SK-N-SH (cell line): ENCODE measurements at regions of chr9 and their contacts with region 1.

Region 1: DNA sequence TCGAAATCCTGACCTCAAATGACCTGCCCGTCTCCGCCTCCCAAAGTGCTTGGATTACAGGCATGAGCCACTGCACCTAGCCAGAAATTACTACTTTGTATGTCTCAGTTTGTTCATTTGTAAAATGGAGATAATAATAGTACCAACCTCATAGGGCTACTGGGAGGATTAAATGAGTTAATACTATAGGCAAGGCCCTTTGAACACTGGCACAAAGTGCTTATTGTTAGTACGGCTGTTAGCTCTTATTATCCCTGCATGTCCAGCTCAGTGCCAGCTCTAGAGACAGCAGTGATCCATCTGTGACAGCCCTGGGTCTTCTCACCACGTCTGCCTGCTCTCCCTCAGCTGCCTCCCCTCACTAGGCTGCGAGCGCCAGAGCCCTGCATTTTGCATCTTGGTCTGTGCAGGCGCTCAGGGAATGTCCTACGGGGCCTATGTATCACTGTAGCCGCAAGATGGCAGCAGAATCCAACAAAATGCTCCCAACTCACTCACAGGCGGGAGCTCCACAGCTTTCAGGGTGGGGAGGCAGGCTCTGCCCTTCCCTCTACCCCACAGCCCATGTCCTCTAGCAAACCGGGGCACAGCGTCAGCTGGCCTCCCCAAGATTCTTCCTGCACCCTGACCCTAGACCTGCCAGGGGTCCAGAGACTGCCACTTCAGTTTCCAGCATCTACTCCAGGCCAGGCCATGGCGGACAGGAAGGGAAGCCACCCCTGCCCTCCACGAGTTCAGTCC is 17.7 kb upstream of the AKNA start:
- DNase-seq: peak; percentile 91
- H3K4me3 ChIP-seq: peak overlapping the region in 1 of 2 experiments; percentile 48; a peak in 1 of 4 replicates
- H3K27ac ChIP-seq: no peak overlapping the region
- H3K4me1 ChIP-seq: no peaks in the 10 kb centered on the region
- H3K27me3 ChIP-seq: no peaks in the 10 kb centered on the region
- CTCF ChIP-seq: peak; percentile 86
- EP300 ChIP-seq: no peak
- RAD21 ChIP-seq: peak; percentile 93

Region 2: DNA sequence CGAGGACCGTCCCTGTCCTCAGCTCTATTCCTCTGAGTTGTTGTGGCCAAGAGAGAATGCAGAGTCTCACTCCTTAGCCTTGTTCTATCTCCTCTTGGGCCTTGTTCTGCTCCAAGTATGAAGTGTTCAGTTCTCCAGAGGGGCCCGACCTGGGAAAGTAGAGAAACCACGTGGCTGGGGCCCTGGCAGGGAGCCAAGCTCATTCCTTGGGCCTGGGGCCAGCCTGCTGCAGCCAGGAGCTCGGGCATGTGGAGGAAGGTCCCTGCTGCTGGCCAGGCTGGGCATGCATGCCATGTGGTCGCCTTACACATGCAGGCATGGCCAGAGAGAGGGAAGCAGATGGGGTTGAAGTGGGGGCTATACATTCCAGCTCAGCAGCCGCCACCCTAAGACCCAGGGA is 189.4 kb before region 1 on chr9:
- CTCF ChIA-PET with region 1: no interaction called
- POLR2A ChIA-PET with region 1: no interaction called
- DNase-seq: peak; percentile 70
- H3K4me3 ChIP-seq: no peak overlapping the region
- H3K27ac ChIP-seq: peak overlapping the region in 1 of 2 experiments; percentile 40; a peak in 1 of 4 replicates
- H3K4me1 ChIP-seq: peaks cover 6 to 22% of the 10 kb centered on the region in 2 experiments; a peak in 3 of 4 replicates
- H3K27me3 ChIP-seq: no peaks in the 10 kb centered on the region
- CTCF ChIP-seq: no peak
- EP300 ChIP-seq: no peak; a peak in 1 of 4 replicates
- RAD21 ChIP-seq: no peak

Region 3: GRCh38 chr9:114387678-114388356 is 17.6 kb before region 1 on chr9 and contains the start of gene AKNA:
- CTCF ChIA-PET with region 1: interaction called, 14 read pairs
- POLR2A ChIA-PET with region 1: no interaction called
- DNase-seq: no peak
- H3K4me3 ChIP-seq: no peak within 1 kb of the TSS
- H3K27ac ChIP-seq: no peak within 1 kb of the TSS
- H3K4me1 ChIP-seq: peaks cover 11 to 14% of the 10 kb centered on the region in 2 experiments; a peak in 3 of 4 replicates
- H3K27me3 ChIP-seq: no peaks in the 10 kb centered on the region
- CTCF ChIP-seq: no peak
- EP300 ChIP-seq: no peak
- RAD21 ChIP-seq: no peak
- polyA plus RNA-seq, gene AKNA: 0.70 and 0.84 TPM in 2 replicates

Region 4: GRCh38 chr9:114442022-114442421 is 36.6 kb after region 1 on chr9:
- CTCF ChIA-PET with region 1: interaction called, 13 read pairs
- POLR2A ChIA-PET with region 1: no interaction called
- DNase-seq: no peak
- H3K4me3 ChIP-seq: no peak overlapping the region
- H3K27ac ChIP-seq: no peak overlapping the region
- H3K4me1 ChIP-seq: no peaks in the 10 kb centered on the region
- H3K27me3 ChIP-seq: no peaks in the 10 kb centered on the region
- CTCF ChIP-seq: no peak
- EP300 ChIP-seq: no peak
- RAD21 ChIP-seq: no peak

Region 5: GRCh38 chr9:114507726-114508125 is 102.3 kb after region 1 on chr9:
- CTCF ChIA-PET with region 1: interaction called, 10 read pairs
- POLR2A ChIA-PET with region 1: no interaction called
- DNase-seq: no peak
- H3K4me3 ChIP-seq: no peak overlapping the region
- H3K27ac ChIP-seq: no peak overlapping the region
- H3K4me1 ChIP-seq: peaks cover 0 to 7% of the 10 kb centered on the region in 2 experiments; a peak in 1 of 4 replicates
- H3K27me3 ChIP-seq: peaks cover 63% of the 10 kb centered on the region
- CTCF ChIP-seq: peak; percentile 45
- EP300 ChIP-seq: no peak
- RAD21 ChIP-seq: peak; percentile 43

Region 6: GRCh38 chr9:114754581-114754980 is 349.1 kb after region 1 on chr9:
- CTCF ChIA-PET with region 1: no interaction called
- POLR2A ChIA-PET with region 1: no interaction called
- DNase-seq: no peak
- H3K4me3 ChIP-seq: no peak overlapping the region
- H3K27ac ChIP-seq: no peak overlapping the region
- H3K4me1 ChIP-seq: no peaks in the 10 kb centered on the region
- H3K27me3 ChIP-seq: no peaks in the 10 kb centered on the region
- CTCF ChIP-seq: no peak
- EP300 ChIP-seq: no peak
- RAD21 ChIP-seq: no peak

Region 7: GRCh38 chr9:114906908-114907571 is 501.6 kb after region 1 on chr9:
- CTCF ChIA-PET with region 1: interaction called, 17 read pairs
- POLR2A ChIA-PET with region 1: no interaction called
- DNase-seq: peak; percentile 45
- H3K4me3 ChIP-seq: no peak overlapping the region; a peak in 1 of 4 replicates
- H3K27ac ChIP-seq: no peak overlapping the region
- H3K4me1 ChIP-seq: peaks cover 7 to 38% of the 10 kb centered on the region in 2 experiments
- H3K27me3 ChIP-seq: no peaks in the 10 kb centered on the region
- CTCF ChIP-seq: peak; percentile 81
- EP300 ChIP-seq: no peak
- RAD21 ChIP-seq: peak; percentile 80

Region 8: GRCh38 chr9:115013998-115014397 is 608.5 kb after region 1 on chr9:
- CTCF ChIA-PET with region 1: interaction called, 23 read pairs
- POLR2A ChIA-PET with region 1: no interaction called
- DNase-seq: peak; percentile 72
- H3K4me3 ChIP-seq: no peak overlapping the region; a peak in 1 of 4 replicates
- H3K27ac ChIP-seq: no peak overlapping the region
- H3K4me1 ChIP-seq: 0 out of 4 replicates have a peak, but pooled peaks cover 0 to 5% of the 10 kb centered on the region in 2 experiments
- H3K27me3 ChIP-seq: no peaks in the 10 kb centered on the region
- CTCF ChIP-seq: peak; percentile 88
- EP300 ChIP-seq: no peak
- RAD21 ChIP-seq: peak; percentile 94